OCI-LY7 (cell line): ENCODE measurements at regions of chr17 and their contacts with region 1.

Region 1: GRCh38 chr17:38584350-38584925 is 21.3 kb downstream of the SRCIN1 start:
- DNase-seq: peak; percentile 75
- H3K4me3 ChIP-seq: peak overlapping the region; percentile 37
- H3K27ac ChIP-seq: no peak overlapping the region
- H3K4me1 ChIP-seq: peaks cover 24% of the 10 kb centered on the region
- CTCF ChIP-seq: peak; percentile 99

Region 2: DNA sequence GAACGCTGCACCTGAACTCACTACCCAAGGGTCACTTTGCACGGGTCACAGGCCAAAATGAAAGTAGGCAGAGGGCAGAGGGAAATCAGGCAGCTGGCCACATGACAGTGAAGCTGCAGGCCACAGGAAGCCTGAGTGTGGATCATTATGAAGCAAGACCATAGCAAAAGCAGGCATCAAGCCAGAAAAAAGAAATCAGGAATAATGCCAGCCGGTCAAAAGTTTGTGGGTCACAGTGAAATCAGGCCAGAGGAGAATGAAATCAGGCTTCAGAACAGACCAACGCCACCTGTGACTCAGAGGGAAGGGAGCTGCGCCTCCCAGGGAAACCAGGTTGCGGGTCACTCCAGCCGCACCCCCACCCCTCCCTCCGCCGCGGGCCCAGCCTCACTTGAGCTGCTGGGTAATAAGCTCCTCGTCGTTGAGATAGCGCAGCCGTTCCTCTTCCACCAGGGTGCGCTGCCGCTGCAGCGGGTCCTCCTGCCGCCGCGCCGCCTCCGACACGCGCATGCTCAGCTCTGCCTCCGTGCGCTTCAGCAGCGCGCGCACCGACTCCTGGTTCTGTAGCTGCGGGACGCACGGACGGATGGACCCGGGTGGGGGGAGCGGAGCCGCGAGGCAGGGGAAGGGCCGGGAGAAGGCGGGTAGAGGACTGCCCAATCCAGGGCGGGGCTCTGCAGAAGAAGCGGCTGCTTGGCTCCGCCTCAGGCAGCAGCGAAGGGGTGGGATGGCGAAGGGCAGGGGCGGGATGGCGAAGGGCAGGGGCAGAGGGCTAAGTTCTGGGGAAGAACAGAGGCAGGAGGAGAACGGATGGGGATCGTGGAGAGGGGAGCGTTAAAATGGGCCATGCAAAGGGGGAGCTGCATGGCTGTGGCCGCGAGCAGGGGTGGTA is 26.4 kb before region 1 on chr17:
- CTCF ChIA-PET with region 1: interaction called, 8 read pairs
- POLR2A ChIA-PET with region 1: interaction called, 4 read pairs
- intact Hi-C with region 1: loop called (anchors 2 kb)
- DNase-seq: peak; percentile 93
- H3K4me3 ChIP-seq: peak overlapping the region; percentile 64
- H3K27ac ChIP-seq: no peak overlapping the region
- H3K4me1 ChIP-seq: peaks cover 23% of the 10 kb centered on the region
- CTCF ChIP-seq: peak; percentile 86

Region 3: DNA sequence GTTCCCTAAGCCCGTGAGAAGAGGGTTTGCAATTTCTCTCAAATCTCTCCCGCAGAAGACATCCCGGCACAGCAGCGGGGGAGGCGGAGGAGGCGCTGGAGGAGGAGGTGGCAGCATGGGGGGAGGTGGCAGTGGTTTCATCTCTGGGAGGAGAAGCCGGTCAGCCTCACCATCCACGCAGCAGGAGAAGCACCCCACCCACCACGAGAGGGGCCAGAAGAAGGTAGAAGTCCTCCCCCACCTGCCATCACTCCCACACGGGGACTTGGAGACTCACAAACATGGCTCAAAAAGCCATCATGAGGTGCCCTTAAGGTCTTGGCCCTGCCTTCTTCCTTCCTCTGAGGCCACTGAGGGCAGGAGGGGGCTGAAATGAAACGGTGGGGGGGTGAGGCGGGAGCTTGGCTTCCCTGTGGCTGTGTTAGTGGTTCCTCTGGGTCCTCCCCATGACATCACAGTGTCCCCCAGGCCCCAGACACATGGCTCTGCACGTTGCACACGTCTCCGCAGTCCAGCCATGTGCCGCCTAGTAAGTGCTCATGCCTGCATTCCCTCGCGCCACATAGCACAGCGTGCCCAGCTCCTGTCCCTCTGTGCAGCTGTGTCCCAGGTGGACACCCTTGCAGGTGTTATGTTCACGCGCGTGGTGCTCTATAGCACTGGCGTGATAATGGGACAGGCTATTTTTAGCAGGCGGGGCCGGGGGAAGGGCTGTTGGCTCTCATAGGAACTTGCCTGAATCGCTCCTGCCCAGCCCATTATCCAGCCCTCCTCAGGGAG is 127.5 kb after region 1 on chr17:
- CTCF ChIA-PET with region 1: no interaction called
- POLR2A ChIA-PET with region 1: no interaction called
- intact Hi-C with region 1: no loop called
- DNase-seq: no peak
- H3K4me3 ChIP-seq: no peak overlapping the region
- H3K27ac ChIP-seq: no peak overlapping the region
- H3K4me1 ChIP-seq: peaks cover 22% of the 10 kb centered on the region
- CTCF ChIP-seq: no peak